HEK293 (cell line): ENCODE measurements at regions of chr5 and their contacts with region 1.

Region 1: GRCh38 chr5:42889311-42889933 is 77.7 kb upstream of the SELENOP start:
- H3K4me3 ChIP-seq: no peak overlapping the region
- H3K27ac ChIP-seq: no peak overlapping the region
- H3K4me1 ChIP-seq: peaks cover 4% of the 10 kb centered on the region; the same call in 1 of the 2 replicates
- CTCF ChIP-seq: peak; percentile 75

Region 2: DNA sequence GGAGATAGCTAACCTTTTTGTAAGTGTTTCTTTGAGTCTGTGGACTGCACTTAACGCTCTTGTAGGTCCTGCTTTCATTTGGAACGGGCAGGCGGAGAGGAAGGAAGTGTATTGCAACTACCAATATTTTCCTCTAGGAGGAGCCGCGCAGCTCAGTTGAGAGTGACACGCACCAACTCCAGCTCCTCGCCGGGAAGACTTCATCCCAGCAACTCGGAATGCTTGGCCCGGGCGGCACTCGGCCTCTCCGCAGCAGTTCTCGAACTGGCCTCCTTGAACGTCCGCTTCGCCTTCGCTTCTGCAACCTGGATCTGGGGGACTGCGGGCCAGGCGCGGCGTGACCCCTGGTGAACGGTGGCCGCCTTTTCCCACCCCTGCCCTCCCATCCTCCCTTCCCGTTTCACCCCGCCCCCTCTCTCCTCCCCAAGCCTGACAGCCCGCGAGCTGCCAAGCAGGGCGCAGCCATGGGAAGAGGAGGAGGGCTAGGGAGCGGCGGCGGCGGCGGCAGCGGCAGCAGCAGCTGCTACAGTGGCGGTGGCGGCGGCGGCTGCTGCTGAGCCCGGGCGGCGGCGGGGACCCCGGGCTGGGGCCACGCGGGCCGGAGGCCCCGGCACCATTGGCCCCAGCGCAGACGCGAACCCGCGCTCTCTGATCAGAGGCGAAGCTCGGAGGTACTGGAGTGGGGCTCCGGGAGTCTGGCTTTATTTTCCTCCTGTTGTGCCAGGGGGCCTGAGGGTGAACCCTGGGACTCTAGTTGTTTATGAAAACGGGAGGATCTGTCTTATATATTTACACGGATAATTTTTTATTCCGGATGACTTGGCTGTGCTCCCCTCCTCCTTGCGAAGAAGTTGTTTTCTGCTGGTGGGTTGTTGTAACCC is 465.9 kb before region 1 on chr5 and contains the start of gene GHR:
- CTCF ChIA-PET with region 1: interaction called, 10 read pairs
- POLR2A ChIA-PET with region 1: no interaction called
- H3K4me3 ChIP-seq: peak within 1 kb of the TSS; percentile 61
- H3K27ac ChIP-seq: peak within 1 kb of the TSS; percentile 79; the same call in 1 of the 2 replicates
- H3K4me1 ChIP-seq: peaks cover 2% of the 10 kb centered on the region; the same call in 1 of the 2 replicates
- CTCF ChIP-seq: peak; percentile 85

Region 3: DNA sequence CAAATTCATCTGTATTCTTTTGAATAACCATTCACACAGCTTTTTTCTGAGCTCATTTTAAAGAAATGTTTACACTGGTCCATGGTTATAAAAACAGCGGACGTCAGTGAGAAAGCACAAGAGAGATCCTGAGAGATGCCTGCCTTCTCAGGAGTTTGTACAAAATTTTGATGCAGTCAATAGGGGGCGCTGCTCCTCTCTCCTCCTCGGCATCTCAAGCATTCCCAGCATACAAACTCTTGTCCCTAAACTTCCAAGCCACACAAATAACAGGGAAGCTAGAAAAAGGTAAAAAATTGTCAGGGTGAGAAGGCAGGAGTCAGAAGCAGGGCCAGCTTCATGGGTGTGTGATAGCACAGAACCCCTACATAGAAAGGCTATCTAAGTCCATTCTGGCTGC is 144.0 kb before region 1 on chr5:
- CTCF ChIA-PET with region 1: interaction called, 21 read pairs
- POLR2A ChIA-PET with region 1: no interaction called
- H3K4me3 ChIP-seq: no peak overlapping the region
- H3K27ac ChIP-seq: no peak overlapping the region
- H3K4me1 ChIP-seq: no peaks in the 10 kb centered on the region
- CTCF ChIP-seq: 0 out of 2 replicates have a peak, but pooled peaks have one; percentile 11

Region 4: DNA sequence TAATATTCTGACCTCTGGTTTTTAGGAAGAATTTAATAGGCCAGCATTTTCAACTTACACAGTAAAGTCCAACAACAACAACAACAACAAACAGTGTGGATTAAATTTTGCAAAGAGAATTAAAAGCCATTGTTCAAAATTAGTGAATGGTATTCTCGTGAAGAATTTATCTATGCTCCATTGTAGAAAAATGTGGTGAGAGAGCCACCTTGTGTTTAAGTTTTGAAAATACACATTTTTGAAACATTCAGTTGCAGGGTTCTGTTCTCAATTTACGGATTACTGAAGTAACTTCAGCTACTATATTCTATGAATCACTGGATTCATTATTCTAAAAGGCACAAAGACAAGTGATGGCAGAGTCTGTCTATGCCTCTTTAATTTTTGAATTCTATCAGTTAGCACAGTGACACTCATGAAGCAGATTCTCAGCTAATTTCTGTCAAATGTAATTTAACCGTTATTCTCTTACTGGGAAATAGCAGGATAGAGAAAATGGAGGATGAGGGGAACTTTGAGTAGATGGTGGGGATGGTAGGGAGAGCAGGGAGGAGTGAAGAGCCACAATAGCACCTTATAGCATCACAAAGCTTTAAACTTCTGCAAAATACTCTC is 121.8 kb before region 1 on chr5:
- CTCF ChIA-PET with region 1: interaction called, 34 read pairs
- POLR2A ChIA-PET with region 1: no interaction called
- H3K4me3 ChIP-seq: no peak overlapping the region
- H3K27ac ChIP-seq: no peak overlapping the region
- H3K4me1 ChIP-seq: no peaks in the 10 kb centered on the region
- CTCF ChIP-seq: no peak

Region 5: DNA sequence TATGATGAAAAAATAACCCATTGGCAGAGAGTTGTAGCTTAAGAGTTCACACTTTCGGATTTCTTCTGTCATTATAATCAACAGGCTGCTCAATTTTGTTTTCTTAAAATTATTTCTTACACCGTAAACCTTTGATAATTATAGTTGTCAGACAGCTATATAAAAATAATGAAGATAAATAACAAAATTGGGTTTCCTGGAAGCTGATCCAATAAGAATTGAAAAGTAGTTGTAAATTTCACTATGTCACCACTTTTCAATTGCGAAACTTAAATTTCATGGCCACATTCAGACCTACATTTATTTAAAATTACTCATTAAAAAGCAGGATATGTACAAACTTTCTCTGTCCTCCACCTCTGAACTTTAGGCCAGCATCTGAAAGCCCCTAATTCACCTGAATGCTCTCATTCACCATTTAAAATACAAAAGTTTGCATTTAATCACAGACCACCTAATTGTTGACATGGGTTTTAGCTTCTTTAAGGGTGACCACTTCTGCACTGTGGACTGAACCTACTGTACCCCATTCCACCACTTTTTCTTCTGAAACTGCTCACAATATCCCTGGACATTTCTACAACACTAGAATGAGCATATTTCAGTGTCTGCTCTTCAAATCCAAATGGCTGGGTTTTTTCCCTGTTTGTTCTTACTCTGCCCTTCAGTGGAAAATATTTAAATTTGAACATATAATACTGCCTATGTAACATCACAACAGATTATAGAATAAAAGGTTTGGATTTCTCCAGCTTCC is 78.4 kb before region 1 on chr5:
- CTCF ChIA-PET with region 1: interaction called, 10 read pairs
- POLR2A ChIA-PET with region 1: no interaction called
- H3K4me3 ChIP-seq: peak overlapping the region; percentile 40
- H3K27ac ChIP-seq: peak overlapping the region; percentile 91
- H3K4me1 ChIP-seq: peaks cover 10% of the 10 kb centered on the region
- CTCF ChIP-seq: no peak

Region 6: DNA sequence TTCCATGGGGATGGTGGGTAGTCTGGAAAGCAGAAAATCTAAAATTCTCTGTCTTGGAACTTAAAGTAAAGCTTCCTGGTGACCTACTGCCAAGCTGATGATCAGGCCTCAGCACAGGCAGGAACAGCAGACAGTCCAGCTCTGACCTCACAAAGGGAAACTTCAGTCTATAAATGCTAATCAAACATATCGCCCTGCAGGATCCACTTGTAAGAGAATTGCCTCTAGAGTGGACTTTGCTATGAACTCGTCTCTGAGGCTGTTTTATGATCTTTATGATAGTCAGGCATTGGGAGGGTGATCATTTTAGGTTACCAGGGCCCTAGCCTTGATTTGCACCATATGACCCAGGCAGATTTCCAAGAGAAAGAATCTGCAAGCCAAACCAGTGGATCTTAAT is 10.1 kb before region 1 on chr5:
- CTCF ChIA-PET with region 1: interaction called, 12 read pairs
- POLR2A ChIA-PET with region 1: no interaction called
- H3K4me3 ChIP-seq: no peak overlapping the region
- H3K27ac ChIP-seq: no peak overlapping the region
- H3K4me1 ChIP-seq: no peaks in the 10 kb centered on the region
- CTCF ChIP-seq: no peak